CD4-positive, alpha-beta memory T cell (primary cell): ENCODE measurements at regions of chr2 and their contacts with region 1.

Region 1: DNA sequence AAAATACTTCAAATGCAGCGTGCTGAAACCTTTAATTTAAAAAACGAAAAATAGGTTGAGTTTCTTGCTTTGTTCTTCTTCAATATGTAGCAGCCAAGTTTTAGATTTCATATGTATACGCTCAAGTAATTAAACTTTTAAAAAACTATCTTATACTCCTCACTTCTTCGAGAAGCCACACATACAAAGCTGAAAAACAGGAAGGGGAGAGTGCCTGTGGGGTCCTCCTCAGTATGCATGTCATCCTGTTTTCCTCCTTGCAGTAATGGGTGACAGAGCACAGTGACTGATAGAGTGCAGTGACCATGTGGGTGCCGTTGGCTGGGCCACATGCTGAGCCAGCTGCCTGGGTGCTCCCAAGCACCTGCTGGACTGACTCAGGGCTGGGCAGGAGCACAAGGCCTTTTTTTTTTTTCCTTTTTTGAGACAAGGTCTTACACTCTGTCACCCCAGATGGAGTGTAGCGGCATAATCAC is 33.3 kb downstream of the UXS1 start:
- DNase-seq: peak in 4 of 5 donors; percentile 56 to 70 (median 62)
- H3K4me3 ChIP-seq: peak overlapping the region in 1 of 2 donors; percentile 64
- H3K4me3 Mint-ChIP-seq: peak overlapping the region; percentile 87 to 98 (median 96)
- H3K27ac ChIP-seq: peak overlapping the region; percentile 80
- H3K27ac Mint-ChIP-seq: peak overlapping the region; percentile 91 to 99 (median 98)
- H3K4me1 ChIP-seq: peaks cover 87% of the 10 kb centered on the region
- H3K4me1 Mint-ChIP-seq: peaks cover 63 to 98% (median 79%) of the 10 kb centered on the region in 4 donors
- H3K27me3 ChIP-seq: no peaks in the 10 kb centered on the region
- H3K27me3 Mint-ChIP-seq: no peaks in the 10 kb centered on the region

Region 2: DNA sequence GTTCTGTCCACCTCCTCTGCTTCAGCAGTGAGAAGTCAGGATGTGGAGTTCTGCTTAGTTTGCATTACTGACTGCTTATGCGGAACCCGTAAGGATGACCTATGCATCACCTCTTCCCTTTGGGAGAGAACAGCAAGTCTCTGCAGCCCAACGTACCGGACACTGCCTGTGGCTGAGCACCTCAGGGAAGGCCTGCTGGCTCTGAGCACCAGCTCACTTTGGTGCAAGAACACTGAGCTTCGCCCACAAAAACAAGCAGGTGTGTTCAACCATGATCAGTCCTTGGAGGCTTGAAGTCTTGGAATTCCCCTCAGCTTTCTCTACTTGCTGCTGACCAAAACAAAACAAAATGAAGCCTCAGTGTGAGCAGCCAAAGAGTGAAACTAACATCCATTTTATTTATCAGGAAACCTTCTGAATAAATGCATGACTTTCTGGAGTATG is 468.9 kb before region 1 on chr2:
- CTCF ChIA-PET with region 1: no interaction called
- POLR2A ChIA-PET with region 1: no interaction called
- intact Hi-C with region 1: no loop called
- DNase-seq: no peak
- H3K4me3 ChIP-seq: no peak overlapping the region
- H3K4me3 Mint-ChIP-seq: no peak overlapping the region
- H3K27ac ChIP-seq: no peak overlapping the region
- H3K27ac Mint-ChIP-seq: no peak overlapping the region
- H3K4me1 ChIP-seq: no peaks in the 10 kb centered on the region
- H3K4me1 Mint-ChIP-seq: peaks cover 0 to 5% (median 0%) of the 10 kb centered on the region in 4 donors
- H3K27me3 ChIP-seq: no peaks in the 10 kb centered on the region
- H3K27me3 Mint-ChIP-seq: peaks cover 0 to under 1% of the 10 kb centered on the region in 2 donors

Region 3: GRCh38 chr2:105834931-105835330 is 325.9 kb before region 1 on chr2:
- CTCF ChIA-PET with region 1: no interaction called
- POLR2A ChIA-PET with region 1: no interaction called
- intact Hi-C with region 1: no loop called
- DNase-seq: peak in 4 of 5 donors; percentile 56 to 67 (median 62)
- H3K4me3 ChIP-seq: no peak overlapping the region
- H3K4me3 Mint-ChIP-seq: peak overlapping the region in 7 of 8 donors; percentile 20 to 70 (median 39)
- H3K27ac ChIP-seq: no peak overlapping the region
- H3K27ac Mint-ChIP-seq: peak overlapping the region; percentile 48 to 90 (median 79)
- H3K4me1 ChIP-seq: peaks cover 81% of the 10 kb centered on the region
- H3K4me1 Mint-ChIP-seq: peaks cover 53 to 86% (median 71%) of the 10 kb centered on the region in 4 donors
- H3K27me3 ChIP-seq: no peaks in the 10 kb centered on the region
- H3K27me3 Mint-ChIP-seq: no peaks in the 10 kb centered on the region

Region 4: GRCh38 chr2:106104332-106105062 is 56.3 kb before region 1 on chr2:
- CTCF ChIA-PET with region 1: interaction called, 65 read pairs
- POLR2A ChIA-PET with region 1: interaction called, 23 read pairs
- intact Hi-C with region 1: loop called (anchors 1 kb)
- DNase-seq: peak; percentile 68 to 74 (median 72)
- H3K4me3 ChIP-seq: no peak overlapping the region
- H3K4me3 Mint-ChIP-seq: no peak overlapping the region
- H3K27ac ChIP-seq: no peak overlapping the region
- H3K27ac Mint-ChIP-seq: peak overlapping the region; percentile 26 to 79 (median 72)
- H3K4me1 ChIP-seq: peaks cover 13% of the 10 kb centered on the region
- H3K4me1 Mint-ChIP-seq: peaks cover 5 to 18% (median 15%) of the 10 kb centered on the region in 4 donors
- H3K27me3 ChIP-seq: no peaks in the 10 kb centered on the region
- H3K27me3 Mint-ChIP-seq: no peaks in the 10 kb centered on the region

Region 5: GRCh38 chr2:106147159-106147558 is 13.7 kb before region 1 on chr2:
- CTCF ChIA-PET with region 1: interaction called, 30 read pairs
- POLR2A ChIA-PET with region 1: interaction called, 308 read pairs
- intact Hi-C with region 1: loop called (anchors 2 kb)
- DNase-seq: no peak
- H3K4me3 ChIP-seq: no peak overlapping the region
- H3K4me3 Mint-ChIP-seq: peak overlapping the region in 7 of 8 donors; percentile 29 to 79 (median 62)
- H3K27ac ChIP-seq: peak overlapping the region; percentile 28
- H3K27ac Mint-ChIP-seq: peak overlapping the region; percentile 74 to 97 (median 93)
- H3K4me1 ChIP-seq: peaks cover 75% of the 10 kb centered on the region
- H3K4me1 Mint-ChIP-seq: peaks cover 54 to 86% (median 67%) of the 10 kb centered on the region in 4 donors
- H3K27me3 ChIP-seq: no peaks in the 10 kb centered on the region
- H3K27me3 Mint-ChIP-seq: no peaks in the 10 kb centered on the region

Region 6: GRCh38 chr2:106193977-106194778 is 33.4 kb after region 1 on chr2 and contains the start of gene UXS1:
- CTCF ChIA-PET with region 1: interaction called, 30 read pairs
- POLR2A ChIA-PET with region 1: interaction called, 153 read pairs
- intact Hi-C with region 1: loop called (anchors 1 kb)
- DNase-seq: peak; percentile 97 to 98 (median 98)
- H3K4me3 ChIP-seq: peak within 1 kb of the TSS; percentile 91 to 92
- H3K4me3 Mint-ChIP-seq: peak within 1 kb of the TSS; percentile 92 to 98 (median 96)
- H3K27ac ChIP-seq: peak within 1 kb of the TSS; percentile 76
- H3K27ac Mint-ChIP-seq: peak within 1 kb of the TSS; percentile 92 to 97 (median 94)
- H3K4me1 ChIP-seq: peaks cover 50% of the 10 kb centered on the region
- H3K4me1 Mint-ChIP-seq: peaks cover 35 to 48% (median 41%) of the 10 kb centered on the region in 4 donors
- H3K27me3 ChIP-seq: no peaks in the 10 kb centered on the region
- H3K27me3 Mint-ChIP-seq: no peaks in the 10 kb centered on the region
- total RNA-seq, gene UXS1: 143 to 150 TPM